ENCODE measurements at regions of chr1 and their contacts with region 1.

Region 1: DNA sequence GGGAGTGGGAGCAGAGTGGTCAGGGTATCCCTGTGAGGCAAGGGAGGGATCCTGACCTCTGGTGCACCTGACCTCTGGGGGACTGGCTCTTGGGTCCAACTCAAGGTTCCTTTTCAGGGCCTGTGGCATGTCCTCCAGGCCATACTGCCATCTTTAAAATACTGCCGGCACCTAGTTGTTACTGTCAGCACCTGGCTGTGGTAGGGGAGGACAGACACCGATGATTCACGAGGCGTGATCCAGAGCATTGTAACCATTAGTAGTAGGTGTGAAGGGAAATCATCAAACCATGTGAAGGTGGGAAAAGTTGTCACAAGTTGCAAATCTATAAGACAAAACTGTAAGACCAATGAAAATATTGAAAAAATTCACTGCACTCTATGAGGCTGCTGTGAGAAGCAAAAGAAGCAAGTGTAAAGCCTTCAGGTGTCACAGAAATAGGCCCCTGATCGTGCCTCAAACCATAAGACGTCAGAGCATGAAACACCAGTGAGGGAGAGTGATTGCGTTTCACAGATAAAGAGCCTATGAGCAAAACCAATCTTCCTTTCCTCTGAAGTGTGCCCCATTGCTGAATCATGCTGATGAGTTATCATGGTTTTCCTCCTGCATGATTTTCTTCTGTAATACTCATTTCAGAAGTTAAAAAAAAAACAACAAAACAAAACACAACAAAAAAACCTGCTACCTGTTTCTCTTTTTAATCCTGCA is 55.3 kb downstream of the CDC7 start:
- DNase-seq: peak; percentile 81
- ATAC-seq: peak; percentile 85
- H3K4me3 Mint-ChIP-seq: peak overlapping the region; percentile 22
- H3K27ac Mint-ChIP-seq: peak overlapping the region; percentile 91
- H3K4me1 Mint-ChIP-seq: peaks cover 81% of the 10 kb centered on the region
- H3K27me3 Mint-ChIP-seq: no peaks in the 10 kb centered on the region
- CTCF ChIP-seq: no peak

Region 2: DNA sequence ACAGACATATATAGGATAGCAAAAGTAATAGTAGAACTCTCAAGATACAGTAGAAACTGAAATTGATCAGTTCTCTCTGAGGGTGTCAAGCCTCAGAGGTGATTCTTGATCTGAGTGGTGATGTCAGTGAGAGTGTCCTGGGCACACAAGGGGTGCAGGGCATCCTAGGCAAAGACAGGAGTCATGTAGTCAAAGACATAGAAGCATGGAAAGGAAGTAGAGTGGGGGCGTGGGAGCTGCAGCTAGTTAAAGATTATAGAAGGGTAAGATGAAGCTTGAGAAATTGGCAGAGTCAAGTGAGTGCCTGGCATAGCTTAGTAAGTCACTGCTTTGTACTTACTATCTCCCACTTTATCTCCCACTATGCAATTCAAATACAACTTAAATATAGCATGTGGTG is 32.5 kb before region 1 on chr1:
- CTCF ChIA-PET with region 1: interaction called, 3 read pairs
- POLR2A ChIA-PET with region 1: interaction called, 5 read pairs
- intact Hi-C with region 1: loop called (anchors 5 kb)
- DNase-seq: peak; percentile 76
- ATAC-seq: peak; percentile 95
- H3K4me3 Mint-ChIP-seq: no peak overlapping the region
- H3K27ac Mint-ChIP-seq: no peak overlapping the region
- H3K4me1 Mint-ChIP-seq: peaks cover 30% of the 10 kb centered on the region
- H3K27me3 Mint-ChIP-seq: no peaks in the 10 kb centered on the region
- CTCF ChIP-seq: no peak

Region 3: GRCh38 chr1:91591175-91591968 is 35.4 kb after region 1 on chr1:
- CTCF ChIA-PET with region 1: no interaction called
- POLR2A ChIA-PET with region 1: no interaction called
- intact Hi-C with region 1: loop called (anchors 5 kb)
- DNase-seq: peak; percentile 24
- ATAC-seq: peak; percentile 68
- H3K4me3 Mint-ChIP-seq: peak overlapping the region; percentile 29
- H3K27ac Mint-ChIP-seq: peak overlapping the region; percentile 62
- H3K4me1 Mint-ChIP-seq: peaks cover 21% of the 10 kb centered on the region
- H3K27me3 Mint-ChIP-seq: peaks cover 5% of the 10 kb centered on the region
- CTCF ChIP-seq: no peak

Region 4: DNA sequence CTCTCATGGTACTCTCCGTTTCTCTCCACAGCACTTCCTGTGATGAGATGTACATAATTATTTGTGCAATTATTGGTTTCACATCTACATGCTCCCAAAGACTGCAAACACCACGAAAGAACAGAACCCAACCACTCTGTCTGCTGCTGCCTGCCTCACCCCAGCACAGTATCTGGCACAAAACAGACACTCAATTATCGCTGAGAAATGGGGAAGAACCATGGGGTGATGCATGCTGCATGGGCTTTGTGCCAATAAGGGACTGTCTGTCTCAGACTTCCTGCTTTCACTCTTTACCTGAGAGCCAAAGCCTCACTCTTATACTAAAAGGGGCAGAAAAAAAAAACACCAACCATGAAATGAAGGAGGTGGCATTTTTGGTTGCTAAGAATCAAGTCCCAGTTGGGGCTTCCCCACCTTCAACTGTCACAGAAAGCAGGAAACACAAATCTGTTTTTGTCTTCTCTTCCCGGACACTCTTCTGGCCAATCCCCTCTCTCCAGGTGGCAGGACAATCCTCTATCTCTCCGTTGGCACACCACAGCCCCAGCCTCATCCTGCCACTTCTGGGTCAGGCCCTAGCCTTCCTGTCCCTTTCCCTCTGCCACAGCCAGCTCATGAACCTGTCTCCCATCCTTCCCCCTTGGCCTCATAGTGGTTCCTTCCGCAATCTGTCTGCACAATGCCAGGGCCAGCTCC is 248.0 kb after region 1 on chr1:
- CTCF ChIA-PET with region 1: interaction called, 3 read pairs
- POLR2A ChIA-PET with region 1: interaction called, 3 read pairs
- intact Hi-C with region 1: loop called (anchors 10 kb)
- DNase-seq: peak; percentile 87
- ATAC-seq: peak; percentile 72
- H3K4me3 Mint-ChIP-seq: peak overlapping the region; percentile 60
- H3K27ac Mint-ChIP-seq: peak overlapping the region; percentile 93
- H3K4me1 Mint-ChIP-seq: peaks cover 46% of the 10 kb centered on the region
- H3K27me3 Mint-ChIP-seq: peaks cover 6% of the 10 kb centered on the region
- CTCF ChIP-seq: no peak